ENCODE measurements at regions of chr12 and their contacts with region 1.

Region 1: DNA sequence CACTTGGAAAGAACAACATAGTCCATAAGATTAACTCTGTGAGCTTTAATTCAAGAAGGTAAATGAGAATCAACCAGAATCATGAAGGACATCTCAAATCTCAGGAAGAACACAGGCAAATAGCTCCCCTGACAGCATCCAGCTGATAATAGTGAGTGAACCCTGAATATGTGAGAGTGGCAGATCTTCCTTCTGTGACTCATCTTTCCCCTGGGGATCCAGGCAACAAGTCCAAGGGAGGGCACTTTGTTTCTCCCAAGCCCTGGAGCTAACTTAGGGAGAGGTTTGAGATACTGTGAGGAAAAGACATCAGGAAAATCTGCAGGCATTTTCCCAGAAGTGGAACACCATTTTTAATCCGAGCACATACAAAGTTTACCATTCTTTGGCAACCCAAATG is 763.9 kb upstream of the MGAT4C start:
- DNase-seq: no peak
- ATAC-seq: no peak
- H3K4me3 Mint-ChIP-seq: no peak overlapping the region
- H3K27ac Mint-ChIP-seq: no peak overlapping the region
- H3K4me1 Mint-ChIP-seq: no peaks in the 10 kb centered on the region
- H3K27me3 Mint-ChIP-seq: no peaks in the 10 kb centered on the region

Region 2: GRCh38 chr12:87039536-87039935 is 19.5 kb after region 1 on chr12:
- CTCF ChIA-PET with region 1: no interaction called
- POLR2A ChIA-PET with region 1: no interaction called
- intact Hi-C with region 1: loop called (anchors 1 kb)
- DNase-seq: no peak
- ATAC-seq: no peak
- H3K4me3 Mint-ChIP-seq: no peak overlapping the region
- H3K27ac Mint-ChIP-seq: no peak overlapping the region
- H3K4me1 Mint-ChIP-seq: no peaks in the 10 kb centered on the region
- H3K27me3 Mint-ChIP-seq: no peaks in the 10 kb centered on the region

Region 3: DNA sequence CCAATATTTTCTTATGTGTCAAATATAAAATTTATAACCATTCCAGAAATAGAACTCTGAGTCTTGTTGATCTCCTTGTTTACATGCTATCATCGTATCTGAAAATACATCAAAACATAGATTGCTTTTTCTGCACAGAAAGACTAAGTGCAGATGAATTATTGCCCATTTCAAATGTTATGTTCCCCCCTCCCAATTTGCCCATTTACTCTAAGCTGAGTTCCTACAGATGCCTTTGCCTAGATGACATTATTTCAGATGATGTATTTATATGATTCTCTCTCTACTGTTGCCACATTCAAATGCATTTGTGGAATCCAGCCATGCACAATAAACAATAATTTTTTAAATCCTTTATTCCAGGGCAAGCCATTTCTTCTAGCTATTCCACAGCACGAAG is 46.3 kb after region 1 on chr12:
- CTCF ChIA-PET with region 1: no interaction called
- POLR2A ChIA-PET with region 1: no interaction called
- intact Hi-C with region 1: no loop called
- DNase-seq: no peak
- ATAC-seq: no peak
- H3K4me3 Mint-ChIP-seq: no peak overlapping the region
- H3K27ac Mint-ChIP-seq: no peak overlapping the region
- H3K4me1 Mint-ChIP-seq: no peaks in the 10 kb centered on the region
- H3K27me3 Mint-ChIP-seq: no peaks in the 10 kb centered on the region